Right ventricle myocardium superior (tissue), 1 donor: ENCODE measurements at regions of chr19 and their contacts with region 1.

Region 1: GRCh38 chr19:51166846-51167490 is 24.9 kb downstream of the SIGLEC7 start:
- DNase-seq: no peak
- ATAC-seq: peak; percentile 34

Region 2: DNA sequence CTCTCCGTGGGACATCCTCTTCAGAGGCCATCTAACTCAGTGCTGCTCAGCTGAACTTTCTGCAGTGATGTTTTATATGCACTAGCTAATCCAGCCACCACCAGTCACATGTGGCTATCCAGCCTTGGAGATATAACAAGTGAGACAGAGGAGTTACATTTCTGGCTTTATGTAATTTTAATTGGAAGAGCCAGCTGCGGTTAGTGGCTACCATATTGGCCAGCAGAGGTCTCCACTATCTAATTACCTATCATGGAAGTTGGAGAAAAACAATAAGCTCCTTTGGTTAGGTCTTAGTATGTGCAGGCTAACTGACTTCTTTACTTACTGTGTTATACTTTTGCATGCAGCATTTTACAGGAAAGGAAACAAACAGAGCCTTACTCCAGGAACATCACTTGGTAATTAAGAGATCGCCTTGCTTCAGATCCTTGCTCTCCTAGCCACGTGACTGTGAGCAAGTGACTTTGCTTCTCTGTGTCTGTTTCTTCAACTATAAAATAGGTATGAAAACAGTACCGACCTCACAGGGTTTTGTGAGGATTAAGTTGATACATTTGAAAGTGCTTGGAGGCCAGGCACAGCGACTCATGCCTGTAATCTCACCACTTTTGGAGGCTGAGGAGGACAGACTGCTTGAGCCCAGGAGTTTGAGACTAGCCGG is 145.8 kb before region 1 on chr19:
- intact Hi-C with region 1: loop called (anchors 5 kb)
- DNase-seq: no peak
- ATAC-seq: peak; percentile 58